ENCODE measurements at regions of chr6 and their contacts with region 1.

Region 1: DNA sequence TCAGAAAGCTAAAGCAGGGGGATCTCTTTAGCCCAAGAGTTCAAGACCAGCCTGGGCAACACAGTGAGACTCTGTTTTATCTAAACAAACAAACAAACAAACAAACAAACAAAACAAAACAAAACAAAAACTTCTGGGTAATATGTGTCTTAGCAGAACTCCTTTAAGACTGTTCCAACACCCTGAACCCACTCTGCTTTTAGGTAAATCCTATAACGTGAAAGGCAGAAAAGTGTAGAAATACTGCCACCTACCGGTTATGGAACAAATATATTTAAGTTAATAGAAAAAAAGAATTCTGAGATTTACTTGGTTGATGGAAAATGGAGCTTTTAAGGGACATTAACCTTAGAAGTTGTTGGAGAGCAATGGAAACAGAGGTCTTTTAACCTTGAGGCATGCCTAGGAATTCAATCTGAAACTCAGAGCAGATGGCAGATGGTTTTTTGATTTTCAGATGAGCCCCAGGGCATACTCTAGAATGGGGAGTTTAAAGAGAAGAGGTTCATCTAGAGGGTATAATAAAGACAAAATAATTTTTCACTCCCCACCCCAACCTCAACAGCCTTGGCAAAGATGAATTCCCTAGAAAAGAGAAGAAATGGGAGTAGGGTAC is 38.5 kb downstream of the SOD2 start:
- DNase-seq: no peak
- ATAC-seq: peak in 1 of 2 donors; percentile 30
- H3K4me3 ChIP-seq: no peak overlapping the region
- H3K27ac ChIP-seq: peak overlapping the region in 1 of 4 donors; percentile 24
- H3K4me1 ChIP-seq: peaks cover 0 to 19% of the 10 kb centered on the region in 2 donors
- H3K27me3 ChIP-seq: no peaks in the 10 kb centered on the region
- CTCF ChIP-seq: peak; percentile 25 to 62 (median 49)
- POLR2A ChIP-seq: no peak

Region 2: GRCh38 chr6:159174263-159174969 is 480.2 kb before region 1 on chr6:
- in situ Hi-C with region 1: loop called in 3 of 4 experiments (anchors 10 kb)
- intact Hi-C with region 1: loop called (anchors 5 kb)
- DNase-seq: peak; percentile 19 to 40
- ATAC-seq: peak in 1 of 2 donors; percentile 49
- H3K4me3 ChIP-seq: no peak overlapping the region
- H3K27ac ChIP-seq: no peak overlapping the region
- H3K4me1 ChIP-seq: peaks cover 0 to 7% of the 10 kb centered on the region in 2 donors
- H3K27me3 ChIP-seq: peaks cover 32 to 50% (median 40%) of the 10 kb centered on the region in 3 donors
- CTCF ChIP-seq: peak; percentile 37 to 79 (median 62)
- POLR2A ChIP-seq: no peak

Region 3: DNA sequence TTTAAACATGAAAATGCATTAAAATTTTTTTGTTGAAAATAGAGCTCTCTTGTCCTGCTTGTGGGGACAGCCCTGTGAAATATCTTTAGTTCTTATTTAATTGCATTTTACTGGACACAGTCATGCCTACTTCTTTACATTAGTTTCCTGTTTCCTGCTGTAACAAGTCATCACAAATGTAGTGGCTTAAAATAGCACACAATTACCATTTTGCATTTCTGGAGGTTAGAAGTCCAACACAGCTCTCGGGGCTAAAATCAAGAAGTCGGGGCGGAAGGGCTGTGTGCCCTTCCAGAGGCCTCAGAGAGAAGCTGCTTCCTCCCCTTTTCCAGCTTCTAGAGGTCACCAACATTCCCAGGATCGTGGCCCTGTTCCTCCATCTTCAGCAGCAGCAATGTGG is 174.9 kb after region 1 on chr6:
- in situ Hi-C with region 1: no loop called
- intact Hi-C with region 1: no loop called
- DNase-seq: no peak
- ATAC-seq: no peak
- H3K4me3 ChIP-seq: no peak overlapping the region
- H3K27ac ChIP-seq: no peak overlapping the region
- H3K4me1 ChIP-seq: peaks cover 0 to 10% of the 10 kb centered on the region in 2 donors
- H3K27me3 ChIP-seq: no peaks in the 10 kb centered on the region
- CTCF ChIP-seq: no peak
- POLR2A ChIP-seq: no peak

Measured in gastrocnemius medialis (tissue), 4 donors.